ENCODE measurements at regions of chr4 and their contacts with region 1.

Region 1: GRCh38 chr4:177047070-177047850 is 254.5 kb upstream of the VEGFC start:
- DNase-seq: no peak
- H3K4me3 ChIP-seq: no peak overlapping the region
- H3K27ac ChIP-seq: no peak overlapping the region
- H3K4me1 ChIP-seq: no peaks in the 10 kb centered on the region
- H3K27me3 ChIP-seq: no peaks in the 10 kb centered on the region
- CTCF ChIP-seq: peak; percentile 32 to 73 (median 66)

Region 2: GRCh38 chr4:176377780-176378179 is 669.5 kb before region 1 on chr4:
- intact Hi-C with region 1: loop called (anchors 5 kb)
- DNase-seq: no peak
- H3K4me3 ChIP-seq: no peak overlapping the region
- H3K27ac ChIP-seq: no peak overlapping the region
- H3K4me1 ChIP-seq: no peaks in the 10 kb centered on the region
- H3K27me3 ChIP-seq: no peaks in the 10 kb centered on the region
- CTCF ChIP-seq: peak in 2 of 3 experiments; percentile 7 to 27

Region 3: GRCh38 chr4:176563591-176563990 is 483.7 kb before region 1 on chr4:
- intact Hi-C with region 1: loop called (anchors 10 kb)
- DNase-seq: no peak
- H3K4me3 ChIP-seq: no peak overlapping the region
- H3K27ac ChIP-seq: no peak overlapping the region
- H3K4me1 ChIP-seq: no peaks in the 10 kb centered on the region
- H3K27me3 ChIP-seq: no peaks in the 10 kb centered on the region
- CTCF ChIP-seq: no peak

Region 4: DNA sequence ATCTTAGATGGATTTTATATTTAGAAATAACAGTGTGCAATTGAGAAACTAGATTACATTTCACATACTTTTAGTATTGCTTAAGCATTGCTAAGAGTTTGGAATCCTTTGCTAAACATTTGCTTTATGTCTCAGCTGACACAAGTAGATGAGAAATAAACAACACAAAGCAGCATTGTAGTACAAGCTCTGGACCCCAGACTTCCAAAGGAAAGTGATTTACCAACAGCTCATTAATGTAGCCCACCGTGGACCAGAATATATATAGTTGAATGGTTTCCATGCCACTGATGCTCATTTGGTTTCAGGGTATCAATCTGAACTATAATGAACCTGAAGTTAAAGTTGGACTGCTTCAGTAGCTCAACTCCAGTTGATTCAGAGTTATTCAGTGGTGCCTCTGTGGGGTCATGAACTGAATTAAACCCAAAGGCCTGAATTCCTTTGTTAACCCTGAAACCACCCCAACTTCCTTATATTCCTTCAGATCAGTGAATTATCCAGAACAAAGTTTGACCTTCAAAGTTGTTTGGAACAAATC is 130.4 kb after region 1 on chr4:
- intact Hi-C with region 1: no loop called
- DNase-seq: no peak
- H3K4me3 ChIP-seq: no peak overlapping the region
- H3K27ac ChIP-seq: peak overlapping the region; percentile 12 to 27
- H3K4me1 ChIP-seq: no peaks in the 10 kb centered on the region
- H3K27me3 ChIP-seq: no peaks in the 10 kb centered on the region
- CTCF ChIP-seq: no peak